ENCODE measurements at regions of chr4 and their contacts with region 1.

Region 1: DNA sequence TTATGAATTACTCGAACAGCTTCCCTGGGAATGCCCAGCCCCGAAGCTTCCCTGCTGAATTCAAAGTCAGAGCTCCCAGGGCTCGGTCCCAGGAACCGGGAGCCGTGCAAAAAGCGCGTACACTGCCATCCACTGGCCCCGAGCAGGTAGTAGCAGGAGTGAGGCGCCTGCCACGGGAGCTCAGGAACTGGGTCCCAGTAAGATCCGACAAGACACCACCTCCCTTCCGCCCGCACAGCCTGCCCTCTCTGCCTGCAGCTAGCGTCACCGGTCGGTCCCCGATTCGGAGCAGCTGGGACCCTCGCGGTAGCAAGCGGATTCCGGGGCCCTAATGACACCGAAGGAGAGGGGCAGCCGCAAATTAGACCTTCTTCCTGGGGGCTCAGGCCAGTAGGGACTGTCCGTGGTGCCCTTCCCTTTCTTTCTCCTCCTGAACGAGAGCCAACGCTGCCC is 1.2 kb downstream of the CORIN start:
- DNase-seq: peak; percentile 73
- H3K4me3 ChIP-seq: peak overlapping the region; percentile 68
- H3K27ac ChIP-seq: no peak overlapping the region
- H3K4me1 ChIP-seq: peaks cover 9% of the 10 kb centered on the region
- CTCF ChIP-seq: peak; percentile 76

Region 2: GRCh38 chr4:47359891-47360290 is 476.8 kb before region 1 on chr4:
- CTCF ChIA-PET with region 1: no interaction called
- POLR2A ChIA-PET with region 1: no interaction called
- intact Hi-C with region 1: no loop called
- DNase-seq: no peak
- H3K4me3 ChIP-seq: no peak overlapping the region
- H3K27ac ChIP-seq: no peak overlapping the region
- H3K4me1 ChIP-seq: no peaks in the 10 kb centered on the region
- CTCF ChIP-seq: no peak

Region 3: DNA sequence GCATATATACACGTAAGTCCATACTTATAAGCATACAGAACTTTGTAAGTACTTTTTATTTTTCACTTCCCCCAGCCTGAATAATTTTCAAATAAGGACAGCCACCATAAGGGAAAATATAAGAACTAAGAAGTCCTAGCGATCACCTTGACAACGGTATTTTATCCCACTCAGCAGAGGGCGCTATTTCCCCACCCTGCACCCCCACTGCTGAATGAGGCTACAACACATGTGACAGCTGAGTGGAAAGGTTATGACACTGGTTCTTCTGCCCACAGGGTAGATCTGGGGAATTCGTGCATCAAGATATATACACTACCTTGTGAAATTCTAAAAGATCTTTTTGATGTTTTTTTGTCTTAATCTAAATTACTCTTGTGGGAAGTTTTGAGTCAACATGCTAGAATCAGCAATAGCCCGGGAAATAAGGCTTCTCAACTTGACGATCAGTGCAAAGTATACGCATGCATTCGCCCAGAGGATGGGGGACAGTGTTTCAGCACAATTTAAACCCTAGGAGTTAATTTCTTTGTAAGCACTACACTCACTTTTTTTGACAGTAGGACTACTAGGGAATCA is 150.3 kb before region 1 on chr4:
- CTCF ChIA-PET with region 1: interaction called, 6 read pairs
- POLR2A ChIA-PET with region 1: no interaction called
- intact Hi-C with region 1: loop called (anchors 5 kb)
- DNase-seq: peak; percentile 56
- H3K4me3 ChIP-seq: no peak overlapping the region
- H3K27ac ChIP-seq: no peak overlapping the region
- H3K4me1 ChIP-seq: no peaks in the 10 kb centered on the region
- CTCF ChIP-seq: peak; percentile 96

Region 4: DNA sequence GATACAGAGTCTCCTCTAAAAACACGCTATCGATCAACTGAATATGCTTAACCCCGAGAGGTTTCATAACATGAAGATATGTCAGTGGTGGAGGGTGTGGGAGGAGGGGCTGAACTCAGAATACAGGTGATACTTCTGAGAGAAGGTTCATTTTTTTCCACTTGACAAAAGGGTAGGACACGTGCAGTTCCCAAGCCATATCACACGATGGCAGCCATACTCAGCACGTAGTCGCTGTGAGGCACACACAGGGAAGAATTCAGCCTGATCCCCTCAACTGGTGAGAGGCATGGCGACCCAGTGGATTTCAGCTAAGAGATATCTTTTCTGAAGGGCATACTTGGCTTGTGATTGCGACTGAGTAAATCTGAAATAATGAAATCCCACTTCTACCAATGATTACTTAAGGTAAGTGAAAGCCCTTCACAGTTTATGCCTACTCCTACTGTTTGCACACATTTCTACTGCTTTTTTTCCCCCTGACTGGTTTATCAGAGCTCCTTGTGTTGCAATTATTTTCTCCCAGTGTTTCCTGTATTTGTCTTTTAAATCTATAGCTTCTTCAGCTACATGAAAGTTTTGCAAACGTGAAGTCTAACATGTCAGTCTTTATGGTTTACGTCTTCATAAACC is 131.9 kb before region 1 on chr4:
- CTCF ChIA-PET with region 1: interaction called, 3 read pairs
- POLR2A ChIA-PET with region 1: no interaction called
- intact Hi-C with region 1: loop called (anchors 2 kb)
- DNase-seq: peak; percentile 46
- H3K4me3 ChIP-seq: no peak overlapping the region
- H3K27ac ChIP-seq: no peak overlapping the region
- H3K4me1 ChIP-seq: no peaks in the 10 kb centered on the region
- CTCF ChIP-seq: peak; percentile 66

Measured in OCI-LY7 (cell line).